ENCODE measurements at regions of chr11 and their contacts with region 1.

Region 1: DNA sequence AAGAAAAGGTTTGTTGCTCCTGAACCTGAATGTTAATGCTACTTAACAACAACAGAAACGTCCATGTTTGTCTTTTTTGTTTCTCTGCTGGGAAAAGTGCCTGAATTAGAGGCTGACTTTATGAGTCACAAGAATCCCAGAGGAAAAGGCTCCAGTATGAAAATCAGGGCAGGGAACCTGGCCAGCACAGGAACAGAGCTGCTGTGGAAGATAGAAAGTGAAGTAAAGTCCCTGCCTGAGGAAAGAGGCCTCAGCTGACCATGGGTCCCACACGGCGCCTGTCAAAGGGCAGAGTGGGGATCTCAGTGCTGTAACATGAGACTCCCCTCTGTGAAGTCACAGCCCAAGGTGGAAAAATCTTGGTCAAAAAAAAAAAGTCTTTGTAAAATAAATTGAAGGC is 632.3 kb upstream of the CCDC90B start:
- DNase-seq: no peak
- H3K4me3 ChIP-seq: no peak overlapping the region
- H3K4me3 Mint-ChIP-seq: no peak overlapping the region
- H3K27ac Mint-ChIP-seq: no peak overlapping the region
- H3K4me1 ChIP-seq: peaks cover 24% of the 10 kb centered on the region
- H3K4me1 Mint-ChIP-seq: peaks cover 6% of the 10 kb centered on the region
- H3K27me3 ChIP-seq: no peaks in the 10 kb centered on the region
- H3K27me3 Mint-ChIP-seq: no peaks in the 10 kb centered on the region
- CTCF ChIP-seq: no peak

Region 2: GRCh38 chr11:83852775-83853442 is 65.6 kb before region 1 on chr11:
- CTCF ChIA-PET with region 1: no interaction called
- POLR2A ChIA-PET with region 1: no interaction called
- intact Hi-C with region 1: loop called (anchors 2 kb)
- DNase-seq: peak in 1 of 2 experiments; percentile 44
- H3K4me3 ChIP-seq: no peak overlapping the region
- H3K4me3 Mint-ChIP-seq: no peak overlapping the region
- H3K27ac Mint-ChIP-seq: peak overlapping the region; percentile 3
- H3K4me1 ChIP-seq: peaks cover 20% of the 10 kb centered on the region
- H3K4me1 Mint-ChIP-seq: peaks cover 12% of the 10 kb centered on the region
- H3K27me3 ChIP-seq: no peaks in the 10 kb centered on the region
- H3K27me3 Mint-ChIP-seq: peaks cover 4% of the 10 kb centered on the region
- CTCF ChIP-seq: no peak

Region 3: DNA sequence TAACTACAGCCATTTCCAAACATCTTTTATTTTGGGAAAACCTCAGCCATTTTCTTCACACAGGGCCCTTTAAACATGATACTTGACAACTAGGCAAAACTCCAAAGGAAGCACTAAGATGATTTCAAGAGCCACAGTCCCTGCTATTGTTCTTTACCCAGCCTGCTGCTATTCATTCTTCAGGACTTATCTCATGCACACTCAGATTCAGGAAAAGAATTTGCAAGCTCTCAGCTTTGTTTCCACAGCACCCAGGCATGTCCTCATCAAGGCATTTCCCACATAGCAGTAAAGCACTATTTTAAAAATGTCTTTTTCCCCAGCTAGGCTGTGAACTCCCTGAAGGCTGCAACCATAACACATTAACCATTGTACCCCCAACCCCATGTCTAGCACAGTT is 23.0 kb before region 1 on chr11:
- CTCF ChIA-PET with region 1: no interaction called
- POLR2A ChIA-PET with region 1: no interaction called
- intact Hi-C with region 1: no loop called
- DNase-seq: no peak
- H3K4me3 ChIP-seq: no peak overlapping the region
- H3K4me3 Mint-ChIP-seq: no peak overlapping the region
- H3K27ac Mint-ChIP-seq: no peak overlapping the region
- H3K4me1 ChIP-seq: no peaks in the 10 kb centered on the region
- H3K4me1 Mint-ChIP-seq: no peaks in the 10 kb centered on the region
- H3K27me3 ChIP-seq: no peaks in the 10 kb centered on the region
- H3K27me3 Mint-ChIP-seq: peaks cover 11% of the 10 kb centered on the region
- CTCF ChIP-seq: no peak

Region 4: DNA sequence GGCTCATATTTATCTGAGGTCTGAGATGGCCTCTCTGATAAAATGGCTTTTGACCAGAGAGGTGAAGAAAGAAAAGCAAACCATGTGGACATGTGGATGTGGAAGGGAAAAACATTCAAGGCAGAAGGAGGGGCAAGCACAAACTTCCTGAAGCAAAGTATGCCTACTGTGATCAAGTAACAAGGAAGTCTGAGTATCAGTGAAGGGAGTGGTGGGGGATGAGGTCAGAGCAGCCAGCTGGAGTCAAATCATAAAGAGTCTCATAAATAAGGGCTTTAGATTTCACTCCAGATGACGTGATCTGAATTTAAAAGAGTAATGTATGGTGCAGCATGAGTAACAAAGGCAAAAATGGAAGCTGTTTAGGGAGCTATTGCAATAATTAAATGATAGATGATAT is 33.0 kb after region 1 on chr11:
- CTCF ChIA-PET with region 1: no interaction called
- POLR2A ChIA-PET with region 1: no interaction called
- intact Hi-C with region 1: no loop called
- DNase-seq: no peak
- H3K4me3 ChIP-seq: no peak overlapping the region
- H3K4me3 Mint-ChIP-seq: no peak overlapping the region
- H3K27ac Mint-ChIP-seq: no peak overlapping the region
- H3K4me1 ChIP-seq: no peaks in the 10 kb centered on the region
- H3K4me1 Mint-ChIP-seq: no peaks in the 10 kb centered on the region
- H3K27me3 ChIP-seq: no peaks in the 10 kb centered on the region
- H3K27me3 Mint-ChIP-seq: no peaks in the 10 kb centered on the region
- CTCF ChIP-seq: no peak

Region 5: GRCh38 chr11:84264066-84264465 is 345.6 kb after region 1 on chr11:
- CTCF ChIA-PET with region 1: no interaction called
- POLR2A ChIA-PET with region 1: no interaction called
- intact Hi-C with region 1: no loop called
- DNase-seq: no peak
- H3K4me3 ChIP-seq: no peak overlapping the region
- H3K4me3 Mint-ChIP-seq: no peak overlapping the region
- H3K27ac Mint-ChIP-seq: no peak overlapping the region
- H3K4me1 ChIP-seq: no peaks in the 10 kb centered on the region
- H3K4me1 Mint-ChIP-seq: no peaks in the 10 kb centered on the region
- H3K27me3 ChIP-seq: no peaks in the 10 kb centered on the region; the same call in 1 of the 2 replicates
- H3K27me3 Mint-ChIP-seq: peaks cover 10% of the 10 kb centered on the region
- CTCF ChIP-seq: no peak

Region 6: GRCh38 chr11:85011173-85011572 is 1092.7 kb after region 1 on chr11:
- CTCF ChIA-PET with region 1: no interaction called
- POLR2A ChIA-PET with region 1: no interaction called
- intact Hi-C with region 1: loop called (anchors 10 kb)
- DNase-seq: no peak
- H3K4me3 ChIP-seq: no peak overlapping the region
- H3K4me3 Mint-ChIP-seq: no peak overlapping the region
- H3K27ac Mint-ChIP-seq: no peak overlapping the region
- H3K4me1 ChIP-seq: no peaks in the 10 kb centered on the region
- H3K4me1 Mint-ChIP-seq: no peaks in the 10 kb centered on the region
- H3K27me3 ChIP-seq: no peaks in the 10 kb centered on the region
- H3K27me3 Mint-ChIP-seq: peaks cover 3% of the 10 kb centered on the region
- CTCF ChIP-seq: no peak

Measured in Caco-2 (cell line).